ENCODE measurements at regions of chr19 and their contacts with region 1.

Region 1: GRCh38 chr19:1355568-1356507 is 27.9 kb upstream of the NDUFS7 start:
- DNase-seq: no peak
- ATAC-seq: peak in 1 of 4 donors; percentile 17
- H3K4me3 ChIP-seq: peak overlapping the region; percentile 84
- H3K27ac ChIP-seq: peak overlapping the region; percentile 67
- H3K4me1 ChIP-seq: peaks cover 15% of the 10 kb centered on the region
- H3K27me3 ChIP-seq: no peaks in the 10 kb centered on the region
- CTCF ChIP-seq: no peak

Region 2: DNA sequence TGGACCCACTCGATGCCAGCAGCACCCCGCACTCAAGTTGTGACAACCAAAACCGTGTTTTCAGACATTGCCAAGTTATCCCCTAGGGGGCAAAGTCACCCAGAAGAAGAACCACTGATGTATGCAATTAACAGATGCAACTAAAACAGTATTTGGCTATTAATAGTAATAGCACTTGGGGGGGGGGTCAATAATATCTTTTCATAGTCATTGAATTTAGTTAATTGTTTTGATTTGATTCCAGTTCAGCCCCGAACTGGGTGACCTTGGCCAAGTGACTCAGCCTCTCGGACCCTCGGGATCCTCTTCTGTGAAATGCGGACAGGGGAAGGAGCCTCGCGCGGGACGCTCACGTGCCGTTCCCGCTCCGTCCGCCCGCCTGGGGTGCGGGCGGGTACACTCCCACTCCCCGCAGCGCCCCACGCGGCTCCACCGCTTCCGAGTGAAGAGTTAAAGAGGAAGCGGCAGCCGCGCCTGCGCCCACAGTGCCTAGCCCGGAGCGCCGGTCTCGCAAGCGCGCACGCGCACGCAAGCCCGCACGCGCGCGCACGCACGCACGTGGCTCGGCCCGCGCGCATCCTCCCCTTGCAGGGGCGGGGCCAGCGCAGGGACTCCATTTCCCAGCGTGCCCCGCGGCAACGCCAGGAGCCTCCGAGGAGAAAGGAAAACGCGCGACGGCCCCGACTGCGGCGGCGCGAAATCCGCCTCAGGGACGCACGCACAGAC is 51.1 kb after region 1 on chr19:
- intact Hi-C with region 1: loop called in 1 of 2 experiments (anchors 2 kb)
- DNase-seq: peak; percentile 100
- ATAC-seq: peak; percentile 84 to 92 (median 88)
- H3K4me3 ChIP-seq: peak overlapping the region; percentile 97
- H3K27ac ChIP-seq: peak overlapping the region; percentile 82
- H3K4me1 ChIP-seq: peaks cover 36% of the 10 kb centered on the region
- H3K27me3 ChIP-seq: no peaks in the 10 kb centered on the region
- CTCF ChIP-seq: peak; percentile 29

Region 3: DNA sequence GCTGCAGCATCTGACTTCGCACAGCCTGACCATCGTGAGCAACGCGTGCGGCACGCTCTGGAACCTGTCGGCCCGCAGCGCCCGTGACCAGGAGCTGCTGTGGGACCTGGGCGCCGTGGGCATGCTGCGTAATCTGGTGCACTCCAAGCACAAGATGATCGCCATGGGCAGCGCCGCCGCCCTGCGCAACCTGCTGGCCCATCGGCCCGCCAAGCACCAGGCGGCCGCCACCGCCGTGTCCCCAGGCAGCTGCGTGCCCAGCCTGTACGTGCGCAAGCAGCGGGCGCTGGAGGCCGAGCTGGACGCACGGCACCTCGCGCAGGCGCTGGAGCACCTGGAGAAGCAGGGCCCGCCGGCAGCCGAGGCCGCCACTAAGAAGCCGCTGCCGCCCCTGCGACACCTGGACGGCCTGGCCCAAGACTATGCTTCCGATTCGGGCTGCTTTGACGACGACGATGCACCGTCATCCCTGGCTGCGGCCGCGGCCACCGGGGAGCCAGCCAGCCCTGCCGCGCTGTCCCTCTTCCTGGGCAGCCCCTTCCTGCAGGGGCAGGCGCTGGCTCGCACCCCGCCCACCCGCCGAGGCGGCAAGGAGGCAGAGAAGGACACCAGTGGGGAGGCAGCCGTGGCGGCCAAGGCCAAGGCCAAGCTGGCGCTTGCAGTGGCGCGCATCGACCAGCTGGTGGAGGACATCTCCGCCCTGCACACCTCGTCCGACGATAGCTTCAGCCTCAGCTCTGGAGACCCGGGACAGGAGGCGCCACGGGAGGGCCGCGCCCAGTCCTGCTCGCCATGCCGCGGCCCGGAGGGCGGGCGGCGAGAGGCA is 109.6 kb after region 1 on chr19:
- intact Hi-C with region 1: loop called in 1 of 2 experiments (anchors 5 kb)
- DNase-seq: peak; percentile 35 to 73
- ATAC-seq: peak; percentile 45 to 68 (median 65)
- H3K4me3 ChIP-seq: peak overlapping the region; percentile 36
- H3K27ac ChIP-seq: no peak overlapping the region
- H3K4me1 ChIP-seq: peaks cover 26% of the 10 kb centered on the region
- H3K27me3 ChIP-seq: peaks cover 0 to 62% (median 47%) of the 10 kb centered on the region in 3 donors
- CTCF ChIP-seq: peak; percentile 53

Measured in psoas muscle (tissue), 8 donors.